CD8-positive, alpha-beta T cell (primary cell): ENCODE measurements at regions of chr18 and their contacts with region 1.

Region 1: GRCh38 chr18:69757733-69758132 is 189.9 kb downstream of the CD226 start:
- DNase-seq: no peak
- ATAC-seq: no peak
- H3K4me3 ChIP-seq: no peak overlapping the region
- H3K4me3 Mint-ChIP-seq: no peak overlapping the region
- H3K27ac ChIP-seq: no peak overlapping the region
- H3K27ac Mint-ChIP-seq: no peak overlapping the region
- H3K4me1 ChIP-seq: peaks cover 15% of the 10 kb centered on the region
- H3K4me1 Mint-ChIP-seq: peaks cover 43% of the 10 kb centered on the region
- H3K27me3 ChIP-seq: no peaks in the 10 kb centered on the region
- H3K27me3 Mint-ChIP-seq: no peaks in the 10 kb centered on the region
- CTCF ChIP-seq: no peak

Region 2: DNA sequence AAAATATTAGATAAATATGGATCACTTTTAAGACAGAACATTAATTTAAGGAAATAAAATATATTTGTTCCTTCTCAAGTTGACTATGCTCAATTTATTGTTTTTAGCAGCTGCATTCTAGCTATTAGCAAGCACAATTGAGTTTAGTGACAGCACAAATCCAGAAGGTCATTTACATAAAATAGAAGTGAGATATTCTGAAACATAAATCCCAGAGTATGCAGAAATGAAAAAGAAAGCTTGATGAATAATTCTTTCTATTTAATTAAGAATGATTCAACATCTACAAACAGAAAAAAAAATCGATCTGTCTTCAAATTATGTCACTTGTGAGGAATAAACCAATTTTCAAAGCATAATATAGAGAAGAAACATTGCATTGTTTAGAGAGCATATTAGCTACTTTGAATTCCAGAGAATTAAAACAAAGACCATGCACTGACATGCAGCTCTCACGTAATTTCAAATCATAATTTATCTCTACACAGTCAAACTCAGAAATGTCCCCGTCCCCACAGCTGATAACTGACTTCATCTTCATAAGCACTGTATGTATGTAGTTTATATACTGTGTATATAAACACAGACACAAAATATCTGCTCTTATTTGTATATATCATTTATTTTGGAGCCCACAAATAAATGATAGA is 1501.2 kb before region 1 on chr18:
- CTCF ChIA-PET with region 1: no interaction called
- POLR2A ChIA-PET with region 1: no interaction called
- intact Hi-C with region 1: loop called in 1 of 2 experiments (anchors 5 kb)
- DNase-seq: no peak
- ATAC-seq: no peak
- H3K4me3 ChIP-seq: no peak overlapping the region
- H3K4me3 Mint-ChIP-seq: no peak overlapping the region
- H3K27ac ChIP-seq: no peak overlapping the region
- H3K27ac Mint-ChIP-seq: no peak overlapping the region
- H3K4me1 ChIP-seq: no peaks in the 10 kb centered on the region
- H3K4me1 Mint-ChIP-seq: no peaks in the 10 kb centered on the region
- H3K27me3 ChIP-seq: no peaks in the 10 kb centered on the region
- H3K27me3 Mint-ChIP-seq: no peaks in the 10 kb centered on the region
- CTCF ChIP-seq: no peak

Region 3: DNA sequence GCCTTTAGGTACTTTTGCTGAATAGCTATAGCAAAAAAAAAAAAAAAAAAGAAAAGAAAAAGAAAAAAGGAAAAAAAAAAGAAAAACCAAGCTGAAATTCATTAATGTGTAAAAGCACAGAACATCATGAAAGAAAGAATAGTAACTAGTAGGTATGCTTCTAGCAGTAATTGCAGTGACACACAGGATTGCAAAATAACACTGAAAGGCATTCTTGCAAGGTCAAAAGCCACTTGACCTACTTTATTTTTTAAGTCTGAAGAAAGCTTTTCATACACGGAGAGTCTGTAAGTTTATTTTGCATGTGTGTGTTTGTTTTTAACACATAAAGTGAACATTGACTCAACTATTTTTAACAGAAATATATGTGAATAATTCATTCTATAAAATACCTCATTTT is 302.6 kb before region 1 on chr18:
- CTCF ChIA-PET with region 1: no interaction called
- POLR2A ChIA-PET with region 1: no interaction called
- intact Hi-C with region 1: no loop called
- DNase-seq: no peak
- ATAC-seq: no peak
- H3K4me3 ChIP-seq: no peak overlapping the region
- H3K4me3 Mint-ChIP-seq: no peak overlapping the region
- H3K27ac ChIP-seq: no peak overlapping the region
- H3K27ac Mint-ChIP-seq: no peak overlapping the region
- H3K4me1 ChIP-seq: no peaks in the 10 kb centered on the region
- H3K4me1 Mint-ChIP-seq: no peaks in the 10 kb centered on the region
- H3K27me3 ChIP-seq: no peaks in the 10 kb centered on the region
- H3K27me3 Mint-ChIP-seq: no peaks in the 10 kb centered on the region
- CTCF ChIP-seq: no peak

Region 4: DNA sequence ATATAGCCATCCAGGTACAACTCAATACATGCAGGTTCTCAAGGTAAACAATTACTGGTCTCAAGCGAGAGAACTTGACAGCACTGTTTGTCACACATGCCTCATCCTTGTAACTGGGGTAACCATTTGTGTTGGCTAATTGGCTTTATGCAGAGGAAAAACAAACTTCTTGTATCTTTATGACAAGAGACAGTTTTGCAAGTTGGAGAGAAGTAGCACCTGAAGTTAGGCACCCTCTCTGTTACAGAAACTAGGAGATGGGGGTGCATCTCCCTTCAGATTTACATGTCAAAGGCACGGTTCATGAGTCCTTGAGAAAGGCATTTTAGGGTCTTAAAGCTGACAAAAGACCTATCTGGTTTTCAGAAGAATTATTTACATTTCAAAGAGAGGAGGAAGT is 51.7 kb before region 1 on chr18:
- CTCF ChIA-PET with region 1: no interaction called
- POLR2A ChIA-PET with region 1: no interaction called
- intact Hi-C with region 1: no loop called
- DNase-seq: no peak
- ATAC-seq: no peak
- H3K4me3 ChIP-seq: no peak overlapping the region
- H3K4me3 Mint-ChIP-seq: no peak overlapping the region
- H3K27ac ChIP-seq: no peak overlapping the region
- H3K27ac Mint-ChIP-seq: no peak overlapping the region
- H3K4me1 ChIP-seq: no peaks in the 10 kb centered on the region
- H3K4me1 Mint-ChIP-seq: peaks cover 3% of the 10 kb centered on the region
- H3K27me3 ChIP-seq: no peaks in the 10 kb centered on the region
- H3K27me3 Mint-ChIP-seq: no peaks in the 10 kb centered on the region
- CTCF ChIP-seq: no peak

Region 5: DNA sequence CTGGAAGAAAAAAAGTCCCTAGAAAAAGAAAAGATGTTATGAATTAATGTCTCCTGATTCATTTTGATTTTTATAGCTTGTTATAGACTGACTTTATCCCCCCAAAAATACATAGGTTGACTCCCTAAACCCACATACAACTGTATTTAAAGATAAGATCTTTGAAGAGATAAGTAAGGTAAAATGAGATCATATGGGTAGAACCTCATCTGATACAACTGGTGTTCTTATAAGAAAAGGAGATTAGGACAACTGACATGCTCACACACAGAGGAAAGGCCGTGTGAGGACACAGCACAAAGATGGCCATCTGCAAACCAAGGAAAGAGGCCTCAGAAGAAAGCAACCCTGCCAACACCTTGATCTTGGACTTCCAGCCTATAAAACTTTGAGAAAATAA is 72.5 kb after region 1 on chr18:
- CTCF ChIA-PET with region 1: no interaction called
- POLR2A ChIA-PET with region 1: no interaction called
- intact Hi-C with region 1: no loop called
- DNase-seq: no peak
- ATAC-seq: no peak
- H3K4me3 ChIP-seq: no peak overlapping the region
- H3K4me3 Mint-ChIP-seq: no peak overlapping the region
- H3K27ac ChIP-seq: no peak overlapping the region
- H3K27ac Mint-ChIP-seq: no peak overlapping the region
- H3K4me1 ChIP-seq: no peaks in the 10 kb centered on the region
- H3K4me1 Mint-ChIP-seq: no peaks in the 10 kb centered on the region
- H3K27me3 ChIP-seq: no peaks in the 10 kb centered on the region
- H3K27me3 Mint-ChIP-seq: no peaks in the 10 kb centered on the region
- CTCF ChIP-seq: no peak